WTC11 (cell line): ENCODE measurements at regions of chr14 and their contacts with region 1.

Region 1: DNA sequence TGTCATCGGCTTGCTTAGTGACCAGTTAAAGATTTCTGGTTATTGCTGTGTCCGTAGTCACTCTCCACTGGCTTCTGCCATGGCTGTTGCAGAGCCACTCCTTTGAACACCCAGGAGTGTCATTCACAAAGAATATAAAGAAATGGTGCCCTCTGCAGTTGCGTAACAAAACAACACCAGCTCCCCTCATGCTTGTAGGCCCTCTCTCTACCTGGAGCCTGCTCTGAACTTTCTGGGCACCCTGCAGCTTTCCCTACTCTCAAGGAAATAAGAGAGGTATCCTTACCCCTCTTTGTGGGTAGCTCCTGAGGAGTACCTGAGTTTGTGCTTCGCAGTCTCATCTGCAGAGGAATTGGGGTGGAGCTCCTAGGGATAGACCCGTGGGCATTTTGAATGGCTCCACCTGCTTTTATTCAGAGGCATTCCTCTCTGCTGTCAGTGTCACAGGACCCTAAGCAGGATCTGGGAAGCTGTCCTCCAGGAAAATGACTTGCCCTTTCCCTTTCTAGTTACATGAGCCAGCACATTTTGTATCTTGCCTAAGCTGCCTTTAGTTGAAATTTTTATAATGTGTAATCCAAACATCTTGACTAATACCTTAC is 97.2 kb upstream of the TMEM260 start:
- DNase-seq: peak; percentile 58
- ATAC-seq: peak; percentile 96
- H3K4me3 Mint-ChIP-seq: no peak overlapping the region
- H3K27ac Mint-ChIP-seq: no peak overlapping the region
- H3K4me1 Mint-ChIP-seq: peaks cover 8% of the 10 kb centered on the region
- H3K27me3 Mint-ChIP-seq: no peaks in the 10 kb centered on the region
- CTCF ChIP-seq: no peak; the same call in none of the 2 replicates

Region 2: GRCh38 chr14:56422703-56423213 is 59.7 kb before region 1 on chr14:
- CTCF ChIA-PET with region 1: interaction called, 12 read pairs
- POLR2A ChIA-PET with region 1: no interaction called
- DNase-seq: peak; percentile 15
- ATAC-seq: peak; percentile 93
- H3K4me3 Mint-ChIP-seq: no peak overlapping the region
- H3K27ac Mint-ChIP-seq: no peak overlapping the region
- H3K4me1 Mint-ChIP-seq: peaks cover 14% of the 10 kb centered on the region
- H3K27me3 Mint-ChIP-seq: no peaks in the 10 kb centered on the region
- CTCF ChIP-seq: peak; percentile 47

Region 3: DNA sequence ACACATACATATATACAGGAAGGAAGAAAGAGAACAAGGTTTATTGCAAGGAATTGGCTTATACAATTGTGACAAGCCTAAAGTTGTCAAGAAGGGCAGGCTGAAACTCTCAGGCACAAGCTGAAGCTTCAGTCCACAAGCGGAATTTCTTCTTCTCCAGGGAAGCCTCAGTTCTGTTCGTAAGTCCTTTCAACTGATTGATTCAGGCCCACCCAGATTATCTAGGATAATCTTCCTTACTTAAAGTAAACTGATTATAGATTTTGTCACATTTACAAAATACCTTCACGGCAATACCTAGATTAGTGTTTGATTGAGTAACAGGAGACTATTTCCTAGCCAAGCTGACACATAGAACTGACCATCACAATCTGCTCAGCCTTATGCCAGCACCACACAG is 15.7 kb after region 1 on chr14:
- CTCF ChIA-PET with region 1: no interaction called
- POLR2A ChIA-PET with region 1: no interaction called
- DNase-seq: no peak
- ATAC-seq: no peak
- H3K4me3 Mint-ChIP-seq: no peak overlapping the region
- H3K27ac Mint-ChIP-seq: no peak overlapping the region
- H3K4me1 Mint-ChIP-seq: peaks cover 27% of the 10 kb centered on the region
- H3K27me3 Mint-ChIP-seq: no peaks in the 10 kb centered on the region
- CTCF ChIP-seq: no peak

Region 4: GRCh38 chr14:56543436-56543835 is 61.0 kb after region 1 on chr14:
- CTCF ChIA-PET with region 1: no interaction called
- POLR2A ChIA-PET with region 1: no interaction called
- DNase-seq: no peak
- ATAC-seq: no peak
- H3K4me3 Mint-ChIP-seq: no peak overlapping the region
- H3K27ac Mint-ChIP-seq: no peak overlapping the region
- H3K4me1 Mint-ChIP-seq: no peaks in the 10 kb centered on the region
- H3K27me3 Mint-ChIP-seq: no peaks in the 10 kb centered on the region
- CTCF ChIP-seq: no peak